Heart right ventricle (tissue), 16 donors: ENCODE measurements at regions of chr6 and their contacts with region 1.

Region 1: DNA sequence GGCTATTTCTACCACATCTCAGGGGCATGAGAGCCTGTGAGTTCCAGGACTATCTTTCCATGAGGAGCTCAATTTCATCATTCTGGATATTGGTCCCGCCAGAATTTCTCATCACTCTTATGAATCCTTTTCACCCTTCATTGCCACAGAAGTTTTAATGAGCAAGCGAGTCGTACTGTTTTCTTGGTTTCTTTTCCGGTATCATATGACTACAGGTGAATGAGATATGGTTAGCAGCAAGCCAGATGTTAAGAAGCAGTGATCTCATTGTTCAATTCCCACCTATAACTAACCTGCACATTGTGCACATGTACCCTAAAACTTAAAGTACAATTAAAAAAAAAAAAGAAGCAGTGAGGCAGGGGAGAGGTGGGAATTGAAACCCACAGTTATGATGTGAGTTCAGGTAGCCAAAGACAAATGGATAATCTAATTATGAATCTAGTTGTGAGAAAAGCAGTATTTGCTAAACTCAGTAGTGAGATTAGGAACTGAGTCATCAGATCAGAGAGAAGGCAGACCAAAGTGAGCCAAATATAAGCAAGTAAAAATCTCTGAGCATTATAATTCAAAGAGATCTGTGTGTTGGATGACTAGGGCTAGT is 78.0 kb upstream of the ELOVL5 start:
- DNase-seq: no peak
- ATAC-seq: no peak
- H3K4me3 ChIP-seq: no peak overlapping the region
- H3K27ac ChIP-seq: no peak overlapping the region
- H3K4me1 ChIP-seq: peaks cover 0 to 14% (median 0%) of the 10 kb centered on the region in 9 donors
- H3K27me3 ChIP-seq: no peaks in the 10 kb centered on the region
- CTCF ChIP-seq: no peak

Region 2: DNA sequence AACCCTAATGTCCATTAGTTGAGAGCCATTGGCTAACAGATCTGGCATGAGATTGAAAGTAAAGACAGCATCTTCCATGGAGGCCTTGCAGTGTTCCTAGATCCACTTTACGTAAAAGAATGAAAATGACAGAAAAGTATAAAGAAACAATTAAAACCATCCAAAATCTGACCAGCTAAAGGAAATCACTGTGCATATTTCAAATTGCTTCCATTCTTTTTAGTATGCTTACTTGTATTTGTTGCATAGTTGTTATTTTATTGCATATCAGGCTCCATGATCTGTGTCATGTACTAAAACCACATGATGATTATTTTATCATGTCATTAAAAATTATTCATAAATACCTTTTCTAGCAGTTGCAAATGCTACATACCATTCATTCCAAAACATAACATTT is 50.2 kb after region 1 on chr6:
- intact Hi-C with region 1: loop called in 2 of 10 experiments (anchors 10 kb)
- DNase-seq: no peak
- ATAC-seq: no peak
- H3K4me3 ChIP-seq: no peak overlapping the region
- H3K27ac ChIP-seq: no peak overlapping the region
- H3K4me1 ChIP-seq: peaks cover 0 to 8% (median 0%) of the 10 kb centered on the region in 9 donors
- H3K27me3 ChIP-seq: no peaks in the 10 kb centered on the region
- CTCF ChIP-seq: no peak

Region 3: DNA sequence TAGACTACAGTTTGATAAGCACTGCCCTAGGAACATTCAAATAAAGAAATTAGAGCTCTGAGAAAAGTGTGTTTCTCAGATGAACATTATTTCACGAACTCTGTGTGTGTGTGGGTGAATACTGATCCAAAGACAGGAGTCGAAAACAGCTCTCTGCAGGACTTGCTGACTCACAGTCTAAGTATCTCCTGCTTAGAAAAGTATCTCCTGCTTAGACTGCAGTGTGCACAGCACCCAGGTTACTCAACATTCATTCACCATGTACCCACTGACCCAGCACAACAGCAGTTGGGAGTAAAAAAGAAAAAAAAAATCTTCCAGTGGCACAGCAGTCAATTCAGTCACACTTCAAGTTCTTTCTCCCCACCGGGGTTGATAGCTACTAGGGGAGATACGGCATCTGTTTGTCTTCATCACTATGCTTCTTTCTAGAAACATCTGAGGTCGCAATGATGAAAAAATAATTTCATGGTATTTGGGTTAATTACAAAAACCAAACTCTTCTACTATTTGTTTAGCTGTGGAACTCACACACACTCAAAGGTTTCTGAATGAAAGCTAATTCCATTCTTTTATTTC is 70.1 kb after region 1 on chr6:
- intact Hi-C with region 1: no loop called
- DNase-seq: no peak
- ATAC-seq: no peak
- H3K4me3 ChIP-seq: no peak overlapping the region
- H3K27ac ChIP-seq: no peak overlapping the region
- H3K4me1 ChIP-seq: peaks cover 0 to 12% (median 5%) of the 10 kb centered on the region in 9 donors
- H3K27me3 ChIP-seq: no peaks in the 10 kb centered on the region
- CTCF ChIP-seq: no peak